CD8-positive, alpha-beta T cell (primary cell): ENCODE measurements at regions of chr10 and their contacts with region 1.

Region 1: GRCh38 chr10:110311357-110311949 is 6.7 kb upstream of the SMNDC1 start:
- DNase-seq: peak in 5 of 9 experiments; percentile 11 to 72 (median 22)
- ATAC-seq: peak; percentile 73
- H3K4me3 ChIP-seq: no peak overlapping the region
- H3K4me3 Mint-ChIP-seq: no peak overlapping the region
- H3K27ac ChIP-seq: no peak overlapping the region
- H3K27ac Mint-ChIP-seq: no peak overlapping the region
- H3K4me1 ChIP-seq: no peaks in the 10 kb centered on the region
- H3K4me1 Mint-ChIP-seq: no peaks in the 10 kb centered on the region
- H3K27me3 ChIP-seq: peaks cover 0 to 2% of the 10 kb centered on the region in 2 experiments
- H3K27me3 Mint-ChIP-seq: peaks cover 2% of the 10 kb centered on the region
- CTCF ChIP-seq: peak; percentile 50

Region 2: DNA sequence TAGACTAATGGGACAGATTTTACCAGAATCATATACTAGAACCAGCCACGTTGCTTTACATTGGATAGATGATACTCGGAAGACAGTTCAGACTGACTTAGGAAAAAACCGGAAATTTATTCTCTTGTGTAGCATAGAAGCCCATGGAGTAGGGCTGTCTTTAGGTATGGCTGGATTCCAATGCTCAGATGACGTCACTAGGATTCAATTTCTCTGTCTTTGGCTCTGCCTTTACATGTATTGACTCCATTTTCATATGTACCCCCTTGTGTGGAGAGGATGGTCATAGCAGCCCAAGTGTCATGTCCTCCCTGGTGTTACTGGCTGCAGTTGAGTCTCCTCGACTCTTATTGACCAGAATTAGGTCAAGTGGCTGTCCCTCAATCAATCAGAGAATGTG is 32.5 kb after region 1 on chr10:
- CTCF ChIA-PET with region 1: no interaction called
- POLR2A ChIA-PET with region 1: no interaction called
- intact Hi-C with region 1: no loop called
- DNase-seq: no peak
- ATAC-seq: no peak
- H3K4me3 ChIP-seq: no peak overlapping the region
- H3K4me3 Mint-ChIP-seq: no peak overlapping the region
- H3K27ac ChIP-seq: no peak overlapping the region
- H3K27ac Mint-ChIP-seq: no peak overlapping the region
- H3K4me1 ChIP-seq: no peaks in the 10 kb centered on the region
- H3K4me1 Mint-ChIP-seq: no peaks in the 10 kb centered on the region
- H3K27me3 ChIP-seq: no peaks in the 10 kb centered on the region
- H3K27me3 Mint-ChIP-seq: peaks cover 5% of the 10 kb centered on the region
- CTCF ChIP-seq: no peak

Region 3: GRCh38 chr10:110354322-110354766 is 42.9 kb after region 1 on chr10:
- CTCF ChIA-PET with region 1: interaction called, 16 read pairs
- POLR2A ChIA-PET with region 1: no interaction called
- intact Hi-C with region 1: loop called (anchors 2 to 5 kb)
- DNase-seq: peak; percentile 54 to 84 (median 75)
- ATAC-seq: no peak
- H3K4me3 ChIP-seq: no peak overlapping the region
- H3K4me3 Mint-ChIP-seq: no peak overlapping the region
- H3K27ac ChIP-seq: no peak overlapping the region
- H3K27ac Mint-ChIP-seq: no peak overlapping the region
- H3K4me1 ChIP-seq: peaks cover 9% of the 10 kb centered on the region
- H3K4me1 Mint-ChIP-seq: peaks cover 48% of the 10 kb centered on the region
- H3K27me3 ChIP-seq: no peaks in the 10 kb centered on the region
- H3K27me3 Mint-ChIP-seq: no peaks in the 10 kb centered on the region
- CTCF ChIP-seq: peak; percentile 63

Region 4: DNA sequence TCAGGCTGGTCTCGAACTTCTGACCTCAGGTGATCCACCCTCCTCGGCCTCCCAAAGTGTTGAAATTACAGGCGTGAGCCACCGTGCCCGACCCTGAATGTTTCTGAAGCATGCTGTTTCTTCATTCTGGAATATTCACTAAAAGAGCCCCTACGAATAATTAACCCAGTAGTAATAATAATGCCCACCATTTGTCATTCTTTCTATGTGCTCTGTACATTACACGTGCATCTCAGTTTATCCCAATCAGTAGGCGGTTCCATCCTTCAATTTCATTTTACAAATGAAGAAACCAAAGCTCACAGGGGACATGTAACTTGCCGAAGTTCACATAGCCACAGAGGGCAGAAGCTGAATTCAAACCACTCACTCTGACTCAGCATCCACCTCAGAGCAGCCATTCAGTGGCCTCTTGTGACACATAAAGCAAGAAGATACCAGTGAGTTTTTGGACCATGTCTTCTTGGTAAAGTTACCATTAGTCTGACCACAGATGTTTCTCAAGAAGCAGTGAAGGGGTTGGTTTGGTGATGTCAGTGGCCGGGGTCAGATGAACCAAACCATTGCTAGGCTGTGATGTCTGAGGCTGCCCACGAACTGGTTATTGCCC is 114.3 kb after region 1 on chr10:
- CTCF ChIA-PET with region 1: no interaction called
- POLR2A ChIA-PET with region 1: no interaction called
- intact Hi-C with region 1: no loop called
- DNase-seq: peak in 2 of 9 experiments; percentile 33 to 36
- ATAC-seq: no peak
- H3K4me3 ChIP-seq: no peak overlapping the region
- H3K4me3 Mint-ChIP-seq: no peak overlapping the region
- H3K27ac ChIP-seq: no peak overlapping the region
- H3K27ac Mint-ChIP-seq: no peak overlapping the region
- H3K4me1 ChIP-seq: no peaks in the 10 kb centered on the region
- H3K4me1 Mint-ChIP-seq: peaks cover 5% of the 10 kb centered on the region
- H3K27me3 ChIP-seq: no peaks in the 10 kb centered on the region
- H3K27me3 Mint-ChIP-seq: no peaks in the 10 kb centered on the region
- CTCF ChIP-seq: no peak

Region 5: DNA sequence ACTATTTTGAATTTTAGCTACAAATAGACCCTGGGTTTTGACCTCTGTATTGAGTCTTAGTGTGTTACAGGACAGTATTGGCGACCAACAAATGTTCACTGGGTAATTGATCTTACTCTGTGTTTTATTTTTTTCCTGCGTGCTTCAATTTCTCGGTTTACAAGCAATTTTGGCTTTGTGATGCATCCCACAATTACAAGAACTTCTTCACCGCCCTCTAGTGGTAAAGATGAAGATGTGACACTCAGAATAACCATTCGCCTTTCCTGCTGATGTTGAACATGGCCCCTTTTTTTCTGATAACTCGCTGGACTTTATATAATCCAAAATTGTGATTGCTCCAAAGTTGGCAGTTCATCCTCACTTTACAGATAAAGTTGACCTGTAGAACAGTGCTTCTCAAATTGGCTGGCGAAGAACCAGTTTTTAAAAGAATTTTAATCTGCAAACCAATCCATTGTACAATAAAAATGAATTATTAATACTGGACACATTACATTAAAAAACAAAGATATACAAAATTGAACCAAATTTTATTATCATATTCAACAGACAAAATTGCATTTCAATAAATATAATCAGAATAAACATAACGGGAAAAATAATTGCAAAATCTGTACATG is 235.8 kb after region 1 on chr10:
- CTCF ChIA-PET with region 1: interaction called, 139 read pairs
- POLR2A ChIA-PET with region 1: interaction called, 6 read pairs
- intact Hi-C with region 1: loop called (anchors 1 kb)
- DNase-seq: peak in 2 of 9 experiments; percentile 66 to 79
- ATAC-seq: peak; percentile 88
- H3K4me3 ChIP-seq: no peak overlapping the region
- H3K4me3 Mint-ChIP-seq: no peak overlapping the region
- H3K27ac ChIP-seq: no peak overlapping the region
- H3K27ac Mint-ChIP-seq: no peak overlapping the region
- H3K4me1 ChIP-seq: no peaks in the 10 kb centered on the region
- H3K4me1 Mint-ChIP-seq: peaks cover 4% of the 10 kb centered on the region
- H3K27me3 ChIP-seq: no peaks in the 10 kb centered on the region
- H3K27me3 Mint-ChIP-seq: peaks cover 16% of the 10 kb centered on the region
- CTCF ChIP-seq: peak; percentile 92

Region 6: DNA sequence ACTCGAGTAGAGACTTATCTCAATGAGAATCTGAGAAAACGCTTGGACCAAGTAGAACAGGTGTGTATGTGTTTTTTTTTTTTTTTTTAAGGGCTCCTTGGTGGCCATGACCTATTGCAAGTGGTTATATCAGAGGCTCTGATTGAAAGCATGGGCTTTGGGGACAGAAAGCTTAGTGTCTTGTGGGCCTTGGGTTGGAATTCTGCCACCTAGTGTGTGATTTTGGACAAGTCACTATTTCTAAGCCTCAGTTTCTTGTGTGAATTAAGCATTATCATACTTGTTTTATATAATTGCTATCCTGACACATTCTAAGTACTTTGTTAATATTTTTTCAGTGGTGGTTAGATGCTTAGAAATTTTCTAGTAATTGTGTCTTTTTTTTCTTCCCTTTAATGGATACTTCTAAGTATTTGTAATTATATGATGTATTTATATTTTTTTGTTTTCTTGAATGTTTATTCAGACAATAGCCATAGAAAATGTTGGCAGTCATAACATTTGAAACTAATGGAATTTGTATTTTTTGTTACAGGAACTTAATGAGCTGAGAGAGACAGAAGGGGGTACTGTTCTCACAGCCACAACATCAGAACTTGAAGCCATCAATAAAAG is 289.1 kb after region 1 on chr10:
- CTCF ChIA-PET with region 1: no interaction called
- POLR2A ChIA-PET with region 1: no interaction called
- intact Hi-C with region 1: loop called (anchors 1 kb)
- DNase-seq: peak in 3 of 9 experiments; percentile 13 to 69 (median 59)
- ATAC-seq: peak; percentile 73
- H3K4me3 ChIP-seq: no peak overlapping the region
- H3K4me3 Mint-ChIP-seq: no peak overlapping the region
- H3K27ac ChIP-seq: no peak overlapping the region
- H3K27ac Mint-ChIP-seq: no peak overlapping the region
- H3K4me1 ChIP-seq: no peaks in the 10 kb centered on the region
- H3K4me1 Mint-ChIP-seq: no peaks in the 10 kb centered on the region
- H3K27me3 ChIP-seq: no peaks in the 10 kb centered on the region
- H3K27me3 Mint-ChIP-seq: no peaks in the 10 kb centered on the region
- CTCF ChIP-seq: peak; percentile 47

Region 7: GRCh38 chr10:110681023-110681681 is 369.7 kb after region 1 on chr10:
- CTCF ChIA-PET with region 1: no interaction called
- POLR2A ChIA-PET with region 1: no interaction called
- intact Hi-C with region 1: loop called in 1 of 2 experiments (anchors 5 kb)
- DNase-seq: peak in 5 of 9 experiments; percentile 16 to 52 (median 35)
- ATAC-seq: no peak
- H3K4me3 ChIP-seq: no peak overlapping the region
- H3K4me3 Mint-ChIP-seq: no peak overlapping the region
- H3K27ac ChIP-seq: no peak overlapping the region
- H3K27ac Mint-ChIP-seq: no peak overlapping the region
- H3K4me1 ChIP-seq: peaks cover 3% of the 10 kb centered on the region
- H3K4me1 Mint-ChIP-seq: peaks cover 4% of the 10 kb centered on the region
- H3K27me3 ChIP-seq: no peaks in the 10 kb centered on the region
- H3K27me3 Mint-ChIP-seq: peaks cover 7% of the 10 kb centered on the region
- CTCF ChIP-seq: peak; percentile 28